Naive thymus-derived CD8-positive, alpha-beta T cell (primary cell): ENCODE measurements at regions of chr10 and their contacts with region 1.

Region 1: GRCh38 chr10:114470956-114471905 is 66.9 kb upstream of the AFAP1L2 start:
- DNase-seq: peak; percentile 46 to 76 (median 66)
- ATAC-seq: peak; percentile 79 to 92
- H3K4me3 Mint-ChIP-seq: peak overlapping the region in 5 of 10 donors; percentile 15 to 75 (median 40)
- H3K27ac Mint-ChIP-seq: peak overlapping the region; percentile 21 to 93 (median 84)
- H3K4me1 Mint-ChIP-seq: peaks cover 14 to 52% (median 39%) of the 10 kb centered on the region in 4 donors
- H3K27me3 Mint-ChIP-seq: no peaks in the 10 kb centered on the region

Region 2: GRCh38 chr10:114541081-114541796 is 70.0 kb after region 1 on chr10:
- POLR2A ChIA-PET with region 1: interaction called, 15 read pairs
- DNase-seq: peak; percentile 36 to 93 (median 87)
- ATAC-seq: peak; percentile 77 to 80
- H3K4me3 Mint-ChIP-seq: peak overlapping the region; percentile 50 to 82 (median 73)
- H3K27ac Mint-ChIP-seq: peak overlapping the region; percentile 96 to 100 (median 99)
- H3K4me1 Mint-ChIP-seq: peaks cover 38 to 95% (median 90%) of the 10 kb centered on the region in 4 donors
- H3K27me3 Mint-ChIP-seq: no peaks in the 10 kb centered on the region